Esophagus squamous epithelium (tissue), 5 donors: ENCODE measurements at regions of chr20 and their contacts with region 1.

Region 1: GRCh38 chr20:57654363-57654997 is 34.3 kb upstream of the ZBP1 start:
- DNase-seq: no peak
- H3K4me3 ChIP-seq: no peak overlapping the region
- H3K27ac ChIP-seq: no peak overlapping the region
- H3K4me1 ChIP-seq: peaks cover 0 to 17% (median 8%) of the 10 kb centered on the region in 3 donors
- H3K27me3 ChIP-seq: no peaks in the 10 kb centered on the region
- CTCF ChIP-seq: peak; percentile 84 to 94 (median 90)
- POLR2A ChIP-seq: no peak

Region 2: DNA sequence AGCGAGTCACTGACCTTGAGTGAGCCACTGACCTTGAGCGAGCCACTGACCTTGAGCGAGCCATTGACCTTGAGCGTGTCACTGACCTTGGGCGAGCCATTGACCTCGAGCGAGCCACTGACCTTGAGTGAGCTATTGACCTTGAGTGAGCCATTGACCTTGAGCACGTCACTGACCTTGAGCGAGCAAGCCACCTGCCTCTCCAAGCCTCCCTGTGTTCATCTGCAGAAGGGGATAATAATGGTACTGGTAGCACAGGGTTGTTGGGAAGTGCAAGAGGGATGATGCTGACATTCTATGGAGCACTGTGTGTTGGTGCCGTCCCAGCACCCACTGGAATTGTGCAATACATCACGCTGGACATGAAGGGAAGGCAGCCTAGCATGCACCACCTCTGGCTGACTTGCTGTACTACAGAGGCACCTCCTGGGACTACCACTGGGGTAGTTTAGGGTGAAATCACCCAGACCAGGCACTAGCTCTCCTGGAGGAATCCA is 189.7 kb before region 1 on chr20:
- intact Hi-C with region 1: no loop called
- DNase-seq: no peak
- H3K4me3 ChIP-seq: no peak overlapping the region
- H3K27ac ChIP-seq: no peak overlapping the region
- H3K4me1 ChIP-seq: no peaks in the 10 kb centered on the region
- H3K27me3 ChIP-seq: peaks cover 0 to 36% (median 0%) of the 10 kb centered on the region in 4 donors
- CTCF ChIP-seq: peak in 3 of 6 experiments; percentile 21 to 43 (median 24)
- POLR2A ChIP-seq: no peak

Region 3: DNA sequence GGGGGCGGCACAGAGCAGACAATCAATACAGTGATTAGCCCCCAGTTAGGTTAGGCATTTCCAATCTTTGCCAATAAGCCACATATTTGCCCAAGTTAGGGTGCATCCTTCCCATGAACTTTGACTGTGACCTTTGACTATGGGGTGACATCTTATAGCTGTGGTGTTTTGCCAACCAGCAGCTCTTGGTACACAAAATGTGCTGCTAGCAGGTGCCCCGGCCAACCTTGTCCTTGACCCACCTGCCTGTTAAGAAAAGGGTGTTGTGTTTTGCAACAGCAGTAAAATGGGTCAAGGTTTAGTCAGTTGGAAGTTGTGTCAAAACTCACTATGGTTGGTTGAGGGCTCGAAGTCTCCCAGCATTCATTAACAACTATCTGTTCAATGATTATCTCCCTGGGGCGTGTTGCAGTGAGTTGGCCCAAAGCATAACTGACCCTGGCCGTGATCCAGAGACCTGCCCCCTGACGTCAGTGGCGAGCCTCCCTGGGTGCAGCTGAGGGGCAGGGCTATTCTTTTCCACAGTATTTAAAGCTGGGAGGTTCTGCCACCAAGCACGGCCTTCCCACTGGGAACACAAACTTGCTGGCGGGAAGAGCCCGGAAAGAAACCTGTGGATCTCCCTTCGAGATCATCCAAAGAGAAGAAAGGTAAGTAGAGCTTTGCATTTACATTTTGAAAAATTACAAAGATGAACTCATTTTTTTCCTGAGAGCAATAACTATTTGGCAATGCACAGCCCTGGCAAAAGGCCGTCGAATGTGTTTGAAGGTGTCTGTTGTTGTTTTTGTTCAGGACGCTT is 93.7 kb before region 1 on chr20 and contains the start of gene PCK1:
- intact Hi-C with region 1: no loop called
- DNase-seq: no peak
- H3K4me3 ChIP-seq: no peak within 1 kb of the TSS
- H3K27ac ChIP-seq: peak within 1 kb of the TSS in 1 of 4 donors; percentile 25
- H3K4me1 ChIP-seq: peaks cover 8 to 16% (median 9%) of the 10 kb centered on the region in 3 donors
- H3K27me3 ChIP-seq: peaks cover 0 to 26% (median 0%) of the 10 kb centered on the region in 4 donors
- CTCF ChIP-seq: no peak
- POLR2A ChIP-seq: peak in 1 of 4 donors; percentile 13
- total RNA-seq, gene PCK1: 0.38 to 1.4 (median 0.65) TPM

Region 4: GRCh38 chr20:57747861-57748481 is 93.5 kb after region 1 on chr20:
- intact Hi-C with region 1: loop called (anchors 2 kb)
- DNase-seq: no peak
- H3K4me3 ChIP-seq: peak overlapping the region in 2 of 4 donors; percentile 32 to 63
- H3K27ac ChIP-seq: peak overlapping the region in 3 of 4 donors; percentile 14 to 69 (median 51)
- H3K4me1 ChIP-seq: peaks cover 16 to 32% (median 18%) of the 10 kb centered on the region in 3 donors
- H3K27me3 ChIP-seq: peaks cover 0 to 24% (median 0%) of the 10 kb centered on the region in 4 donors
- CTCF ChIP-seq: no peak
- POLR2A ChIP-seq: no peak

Region 5: GRCh38 chr20:58094160-58094559 is 439.7 kb after region 1 on chr20:
- intact Hi-C with region 1: loop called (anchors 10 kb)
- DNase-seq: no peak
- H3K4me3 ChIP-seq: no peak overlapping the region
- H3K27ac ChIP-seq: no peak overlapping the region
- H3K4me1 ChIP-seq: no peaks in the 10 kb centered on the region
- H3K27me3 ChIP-seq: peaks cover 0 to 15% (median 0%) of the 10 kb centered on the region in 4 donors
- CTCF ChIP-seq: no peak
- POLR2A ChIP-seq: no peak

Region 6: DNA sequence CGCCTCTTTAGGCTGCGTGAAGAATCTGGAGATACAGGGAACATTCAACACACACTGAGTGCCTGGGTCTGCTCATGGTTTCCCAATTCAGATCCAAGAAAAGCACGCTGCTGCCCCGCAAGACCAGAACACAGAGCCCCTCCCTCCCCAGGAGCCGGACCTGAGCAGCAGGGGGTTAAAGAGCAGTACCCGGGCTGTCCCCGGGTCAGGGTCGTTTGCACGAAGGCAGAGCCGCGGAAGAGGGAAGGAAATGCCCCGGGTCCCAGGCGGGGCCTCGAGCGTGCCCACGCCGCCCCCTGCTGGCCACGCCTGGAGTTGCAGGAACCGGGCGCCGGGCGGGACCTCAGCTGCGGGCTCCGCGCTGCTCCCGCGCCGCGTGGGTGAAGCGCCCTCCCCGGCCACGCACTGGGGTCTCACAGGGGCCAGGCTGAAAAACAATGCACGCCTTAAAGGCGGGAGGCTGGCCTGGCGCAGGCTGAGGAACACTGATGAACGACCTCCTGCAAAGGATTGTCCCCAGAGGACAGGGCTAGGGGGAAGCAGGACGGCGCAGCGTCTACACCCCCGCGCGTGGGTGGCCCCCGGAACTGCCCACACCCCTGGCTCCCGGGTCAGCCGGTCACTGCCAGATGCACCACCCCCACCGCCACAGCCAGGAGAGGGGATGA is 525.1 kb after region 1 on chr20:
- intact Hi-C with region 1: loop called (anchors 5 kb)
- DNase-seq: no peak
- H3K4me3 ChIP-seq: peak overlapping the region in 3 of 4 donors; percentile 19 to 55 (median 30)
- H3K27ac ChIP-seq: no peak overlapping the region
- H3K4me1 ChIP-seq: peaks cover 5 to 27% (median 21%) of the 10 kb centered on the region in 3 donors
- H3K27me3 ChIP-seq: peaks cover 0 to 54% (median 0%) of the 10 kb centered on the region in 4 donors
- CTCF ChIP-seq: peak; percentile 81 to 100 (median 96)
- POLR2A ChIP-seq: no peak